ENCODE measurements at regions of chr3 and their contacts with region 1.

Region 1: DNA sequence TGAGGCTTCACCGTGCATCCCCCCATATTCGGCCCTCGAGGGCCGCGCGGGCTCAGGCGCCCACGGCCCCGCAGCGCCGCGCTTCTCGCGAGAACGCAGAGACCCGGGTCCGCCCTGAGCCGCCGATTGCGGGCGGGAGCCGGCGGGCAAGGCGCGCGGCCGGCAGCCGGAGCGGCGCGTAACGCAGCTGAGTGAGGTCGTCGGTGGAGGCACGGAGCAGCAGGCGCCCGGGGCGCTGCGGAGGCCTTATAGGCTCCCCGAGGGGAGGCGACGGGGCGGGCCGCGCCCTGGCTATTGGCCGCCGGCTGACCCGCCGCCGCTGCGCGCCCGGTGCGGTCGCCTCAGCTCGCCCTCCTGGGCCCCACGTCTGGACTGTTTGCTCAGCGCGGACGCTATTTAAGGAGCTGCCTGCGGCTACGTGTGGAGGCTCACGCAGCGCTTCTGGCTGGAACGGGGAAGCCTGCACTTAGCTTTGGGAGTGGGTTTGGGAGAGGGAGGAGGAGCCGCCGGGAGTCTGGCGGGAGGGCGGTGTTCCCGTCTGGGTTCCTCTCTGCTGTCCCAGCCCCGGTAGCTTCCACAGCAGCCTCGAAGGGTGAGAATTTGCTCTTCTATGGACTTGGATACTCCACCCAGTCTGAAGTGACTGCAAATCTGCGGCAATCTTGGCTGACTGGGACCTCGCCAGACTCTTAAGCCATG is at the start of gene PLOD2:
- DNase-seq: peak; percentile 42
- H3K4me3 ChIP-seq: peak within 1 kb of the TSS; percentile 74 to 84
- H3K27ac ChIP-seq: peak within 1 kb of the TSS; percentile 87 to 93
- H3K4me1 ChIP-seq: no peaks in the 10 kb centered on the region
- H3K27me3 ChIP-seq: no peaks in the 10 kb centered on the region
- CTCF ChIP-seq: no peak
- POLR2A ChIP-seq: peak; percentile 58
- total RNA-seq, gene PLOD2: 10.7 to 14.6 TPM

Region 2: DNA sequence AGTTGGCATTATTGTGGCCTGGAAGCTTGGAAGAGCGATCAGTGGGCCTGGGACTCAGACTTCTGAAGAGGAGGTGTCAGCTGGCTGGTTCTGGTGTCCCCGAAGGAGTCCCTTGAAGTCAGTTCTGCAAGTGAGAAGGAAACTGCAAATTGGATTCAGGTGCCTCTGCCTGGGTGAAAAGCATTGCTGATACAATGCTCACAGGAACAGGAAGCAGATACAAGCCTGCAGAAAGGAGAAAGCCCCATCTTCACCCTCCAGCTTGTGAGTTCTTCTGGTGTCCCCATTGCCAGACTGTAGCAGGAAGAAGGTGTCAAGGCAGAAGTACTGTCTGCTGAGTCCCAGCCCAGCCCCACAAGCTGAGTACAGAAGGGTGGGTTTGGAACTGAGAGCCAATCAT is 271.4 kb before region 1 on chr3:
- intact Hi-C with region 1: no loop called
- DNase-seq: no peak
- H3K4me3 ChIP-seq: no peak overlapping the region
- H3K27ac ChIP-seq: no peak overlapping the region
- H3K4me1 ChIP-seq: no peaks in the 10 kb centered on the region
- H3K27me3 ChIP-seq: no peaks in the 10 kb centered on the region
- CTCF ChIP-seq: no peak
- POLR2A ChIP-seq: no peak

Region 3: GRCh38 chr3:146072824-146073223 is 88.3 kb before region 1 on chr3:
- intact Hi-C with region 1: loop called (anchors 10 kb)
- DNase-seq: no peak
- H3K4me3 ChIP-seq: no peak overlapping the region
- H3K27ac ChIP-seq: no peak overlapping the region
- H3K4me1 ChIP-seq: no peaks in the 10 kb centered on the region
- H3K27me3 ChIP-seq: no peaks in the 10 kb centered on the region
- CTCF ChIP-seq: no peak
- POLR2A ChIP-seq: no peak

Region 4: DNA sequence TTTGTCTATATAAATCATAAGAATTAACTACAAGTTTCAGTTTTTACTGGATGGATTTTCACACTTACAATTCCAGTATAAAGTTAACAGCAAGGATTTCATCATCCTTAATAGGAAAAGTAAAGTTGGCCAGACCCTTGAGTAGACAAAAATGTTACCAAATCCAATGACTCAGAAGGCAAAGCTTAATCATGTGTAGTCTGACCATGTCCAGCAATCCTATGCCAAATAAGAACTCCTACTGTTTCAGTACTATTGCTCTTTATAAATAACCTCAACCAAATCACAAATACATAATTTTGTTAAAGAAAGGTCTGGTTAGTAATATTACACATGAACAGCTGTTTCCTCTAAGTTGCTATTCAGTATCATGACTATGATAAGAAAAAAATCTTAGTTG is 35.2 kb before region 1 on chr3:
- intact Hi-C with region 1: loop called (anchors 5 kb)
- DNase-seq: no peak
- H3K4me3 ChIP-seq: no peak overlapping the region
- H3K27ac ChIP-seq: no peak overlapping the region
- H3K4me1 ChIP-seq: no peaks in the 10 kb centered on the region
- H3K27me3 ChIP-seq: no peaks in the 10 kb centered on the region
- CTCF ChIP-seq: no peak
- POLR2A ChIP-seq: no peak

Measured in prostate gland (tissue), 2 donors.